HEK293 (cell line): ENCODE measurements at regions of chr13 and their contacts with region 1.

Region 1: DNA sequence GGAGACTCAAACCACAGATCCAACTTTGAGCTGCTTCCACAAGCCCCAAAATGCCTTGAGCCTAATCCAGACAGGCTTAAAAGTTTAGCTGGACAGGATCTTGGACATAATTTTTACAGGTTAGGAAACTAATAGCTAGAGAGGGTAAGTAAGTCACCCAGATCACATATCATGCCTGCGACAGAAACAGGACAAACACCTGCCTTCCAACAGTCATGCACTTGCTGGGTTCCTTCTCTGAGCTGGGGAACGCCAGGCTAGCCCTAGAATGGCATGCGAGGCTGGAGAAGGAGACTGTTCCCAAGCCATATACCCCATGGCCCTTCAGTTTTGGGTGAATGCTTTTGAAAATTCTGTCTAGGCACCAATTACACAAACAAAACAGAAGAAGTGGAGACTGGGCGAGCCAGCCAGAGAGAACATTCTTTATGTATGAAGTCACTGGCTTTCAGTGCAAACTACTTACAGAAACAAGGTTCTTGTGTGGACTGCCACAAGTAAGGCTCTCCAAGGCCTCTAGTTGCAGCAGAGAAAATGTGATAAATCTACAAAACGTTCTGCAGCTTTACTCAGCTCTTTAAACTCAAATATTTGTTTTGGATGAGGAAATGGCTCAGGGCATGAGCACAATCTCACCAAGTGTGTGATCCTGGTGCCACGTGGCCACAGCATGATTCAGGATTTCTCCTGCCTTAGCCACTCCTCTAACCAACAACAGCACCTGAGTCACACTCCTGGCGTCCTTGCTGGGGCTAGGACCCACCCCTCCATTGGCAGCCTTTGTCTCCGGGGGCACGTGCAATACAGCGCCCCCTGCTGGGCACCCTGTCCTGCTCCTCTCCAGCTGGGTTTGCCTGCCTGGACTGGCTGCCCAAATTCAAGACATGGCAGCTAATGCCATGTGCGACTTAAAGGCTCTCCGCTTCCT is 73.4 kb upstream of the UBL3 start:
- H3K4me3 ChIP-seq: no peak overlapping the region
- H3K27ac ChIP-seq: peak overlapping the region; percentile 81
- H3K4me1 ChIP-seq: peaks cover 13% of the 10 kb centered on the region
- CTCF ChIP-seq: peak; percentile 76

Region 2: DNA sequence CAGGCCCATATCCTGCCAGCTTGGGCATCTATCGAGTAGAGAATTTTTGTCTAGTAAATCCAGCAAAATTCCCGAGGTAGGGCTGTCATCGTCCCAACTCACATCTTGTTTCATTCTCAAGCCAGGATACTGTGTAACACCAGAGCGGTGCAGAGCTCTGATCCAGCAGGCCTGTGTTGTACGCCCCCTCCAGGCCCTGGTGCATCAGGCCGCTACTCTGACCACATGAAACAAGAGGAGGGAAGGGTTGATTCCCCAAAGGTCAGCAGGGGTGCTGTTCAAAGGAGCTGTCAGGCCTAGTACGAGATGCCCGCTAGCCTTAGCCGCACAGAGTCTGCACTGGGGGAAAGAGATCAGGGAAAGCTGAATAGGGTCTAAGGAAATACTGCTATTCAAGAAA is 604.4 kb before region 1 on chr13:
- CTCF ChIA-PET with region 1: no interaction called
- POLR2A ChIA-PET with region 1: no interaction called
- H3K4me3 ChIP-seq: no peak overlapping the region
- H3K27ac ChIP-seq: no peak overlapping the region
- H3K4me1 ChIP-seq: no peaks in the 10 kb centered on the region
- CTCF ChIP-seq: no peak

Region 3: DNA sequence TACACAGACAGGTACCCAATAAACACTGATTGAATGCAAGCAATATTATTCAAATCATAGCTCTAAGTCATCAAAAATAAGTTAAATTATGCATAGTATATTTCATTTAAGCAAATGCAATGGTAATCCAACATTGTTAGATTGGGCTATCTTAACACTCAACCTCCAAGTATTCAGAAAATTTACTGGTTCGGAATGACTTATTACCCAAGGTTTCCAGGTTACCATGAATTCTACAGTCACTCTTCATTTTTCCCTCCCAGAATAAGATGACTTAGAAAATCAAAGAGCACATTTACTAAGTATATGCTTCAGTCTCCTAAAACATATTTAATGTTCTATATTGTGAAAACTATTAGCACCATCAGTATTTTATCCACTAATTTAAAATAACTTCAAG is 79.4 kb before region 1 on chr13:
- CTCF ChIA-PET with region 1: interaction called, 18 read pairs
- POLR2A ChIA-PET with region 1: interaction called, 18 read pairs
- H3K4me3 ChIP-seq: no peak overlapping the region
- H3K27ac ChIP-seq: no peak overlapping the region
- H3K4me1 ChIP-seq: peaks cover 11% of the 10 kb centered on the region
- CTCF ChIP-seq: no peak

Region 4: GRCh38 chr13:29850224-29850898 is 73.5 kb before region 1 on chr13 and contains the start of gene UBL3:
- CTCF ChIA-PET with region 1: interaction called, 18 read pairs
- POLR2A ChIA-PET with region 1: interaction called, 18 read pairs
- H3K4me3 ChIP-seq: peak within 1 kb of the TSS; percentile 81
- H3K27ac ChIP-seq: peak within 1 kb of the TSS; percentile 88
- H3K4me1 ChIP-seq: peaks cover 5% of the 10 kb centered on the region
- CTCF ChIP-seq: no peak

Region 5: GRCh38 chr13:29908416-29908815 is 15.4 kb before region 1 on chr13:
- CTCF ChIA-PET with region 1: interaction called, 15 read pairs
- POLR2A ChIA-PET with region 1: interaction called, 3 read pairs
- H3K4me3 ChIP-seq: no peak overlapping the region
- H3K27ac ChIP-seq: 0 out of 2 replicates have a peak overlapping the region, but pooled peaks have one; percentile 16
- H3K4me1 ChIP-seq: peaks cover 6% of the 10 kb centered on the region
- CTCF ChIP-seq: no peak

Region 6: DNA sequence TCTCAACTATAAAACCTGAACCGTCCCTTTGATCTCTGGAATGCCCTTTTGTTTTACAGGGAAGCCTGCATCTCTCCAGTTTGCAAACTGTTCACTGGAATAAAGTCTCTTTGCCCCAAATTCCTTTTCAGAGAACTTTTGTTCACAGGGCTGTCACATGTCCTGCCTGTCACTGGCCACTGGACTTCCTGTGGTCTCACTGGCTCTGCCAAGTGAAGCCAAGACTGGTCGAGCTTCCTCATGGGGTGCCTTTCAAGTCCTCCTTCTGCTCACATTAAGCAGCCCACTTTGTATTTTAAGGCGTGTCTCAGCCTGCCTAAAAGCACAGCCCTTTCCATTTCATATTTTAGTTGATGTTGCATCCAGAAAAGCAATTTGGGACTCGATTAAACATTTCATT is 167.9 kb after region 1 on chr13:
- CTCF ChIA-PET with region 1: no interaction called
- POLR2A ChIA-PET with region 1: no interaction called
- H3K4me3 ChIP-seq: no peak overlapping the region
- H3K27ac ChIP-seq: no peak overlapping the region
- H3K4me1 ChIP-seq: no peaks in the 10 kb centered on the region
- CTCF ChIP-seq: no peak